ENCODE measurements at regions of chr11 and their contacts with region 1.

Region 1: GRCh38 chr11:93784152-93784934 is at the start of gene MED17:
- DNase-seq: peak; percentile 95
- H3K27ac ChIP-seq: peak within 1 kb of the TSS; percentile 91
- CTCF ChIP-seq: peak; percentile 36; the same call in 1 of the 2 replicates

Region 2: GRCh38 chr11:93740427-93741093 is 43.8 kb before region 1 on chr11:
- CTCF ChIA-PET with region 1: no interaction called
- POLR2A ChIA-PET with region 1: interaction called, 18 read pairs
- DNase-seq: peak; percentile 46
- H3K27ac ChIP-seq: peak overlapping the region; percentile 91
- CTCF ChIP-seq: no peak

Region 3: DNA sequence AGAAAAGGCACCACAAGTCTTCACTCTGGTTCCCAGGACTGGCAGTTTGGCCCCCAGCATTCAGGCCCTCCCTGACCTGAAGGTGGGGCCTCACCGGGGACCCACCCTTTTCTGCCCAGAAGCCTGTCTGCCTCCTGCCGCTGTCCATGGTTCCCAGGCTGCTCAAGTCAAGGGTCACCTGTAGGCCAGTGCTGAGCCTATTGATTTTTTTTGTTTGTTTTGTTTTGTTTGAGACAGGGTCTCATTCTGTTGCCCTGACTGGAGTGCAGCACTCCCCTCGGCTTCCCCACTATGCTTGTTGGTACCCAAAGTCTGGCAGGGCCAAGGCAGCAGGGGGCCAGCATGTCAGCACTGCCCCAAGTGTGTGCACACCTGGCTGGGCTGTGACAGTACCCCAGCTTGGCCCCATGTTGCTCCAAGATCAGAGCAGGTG is 11.3 kb before region 1 on chr11:
- CTCF ChIA-PET with region 1: interaction called, 4 read pairs
- POLR2A ChIA-PET with region 1: interaction called, 13 read pairs
- DNase-seq: no peak
- H3K27ac ChIP-seq: no peak overlapping the region
- CTCF ChIP-seq: no peak

Measured in RWPE1 (cell line).